ENCODE measurements at regions of chr1 and their contacts with region 1.

Region 1: DNA sequence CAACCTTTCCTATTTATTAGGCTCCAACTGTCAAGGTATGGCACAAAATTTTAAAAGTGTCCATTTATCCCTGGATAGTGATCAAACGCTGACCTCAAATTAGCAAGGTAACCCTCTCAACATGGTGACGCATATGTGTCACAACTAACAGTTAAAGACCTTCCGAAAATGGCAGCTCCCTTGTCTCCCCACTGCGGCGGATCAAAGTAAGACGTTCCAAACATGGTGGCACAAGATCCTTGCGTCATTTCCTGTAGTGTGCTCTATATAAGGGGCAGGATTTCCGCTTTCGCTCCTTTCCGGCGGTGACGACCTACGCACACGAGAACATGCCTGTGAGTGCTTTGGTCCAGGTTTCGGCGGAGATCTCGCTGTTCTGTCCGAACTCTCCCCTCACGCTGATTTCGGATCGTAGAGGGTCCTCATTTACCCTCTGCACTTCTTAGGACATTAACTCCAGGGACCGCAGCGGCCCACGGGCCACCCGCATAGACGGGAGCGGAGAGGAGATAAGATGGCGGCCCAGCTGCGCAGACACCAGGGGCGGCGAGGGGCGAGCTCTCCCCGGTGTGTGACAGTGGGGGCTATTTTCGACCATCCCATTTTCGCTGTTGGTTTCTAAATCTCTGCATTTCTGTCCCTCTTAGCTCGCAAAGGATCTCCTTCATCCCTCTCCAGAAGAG is at the start of gene RPS27:
- DNase-seq: peak; percentile 93
- ATAC-seq: peak; percentile 85
- H3K4me3 Mint-ChIP-seq: peak within 1 kb of the TSS; percentile 95
- H3K27ac Mint-ChIP-seq: peak within 1 kb of the TSS; percentile 98
- H3K4me1 Mint-ChIP-seq: peaks cover 28% of the 10 kb centered on the region
- H3K27me3 Mint-ChIP-seq: no peaks in the 10 kb centered on the region
- CTCF ChIP-seq: no peak
- total RNA-seq, gene RPS27: 1,638 to 1,644 TPM

Region 2: GRCh38 chr1:153727463-153728304 is 262.9 kb before region 1 on chr1 and contains the start of gene INTS3:
- CTCF ChIA-PET with region 1: interaction called, 4 read pairs
- POLR2A ChIA-PET with region 1: interaction called, 12 read pairs
- intact Hi-C with region 1: no loop called
- DNase-seq: peak; percentile 100
- ATAC-seq: peak; percentile 100
- H3K4me3 Mint-ChIP-seq: peak within 1 kb of the TSS; percentile 90
- H3K27ac Mint-ChIP-seq: peak within 1 kb of the TSS; percentile 93
- H3K4me1 Mint-ChIP-seq: peaks cover 39% of the 10 kb centered on the region
- H3K27me3 Mint-ChIP-seq: no peaks in the 10 kb centered on the region
- CTCF ChIP-seq: no peak
- total RNA-seq, gene INTS3: 45.0 to 45.5 TPM

Region 3: DNA sequence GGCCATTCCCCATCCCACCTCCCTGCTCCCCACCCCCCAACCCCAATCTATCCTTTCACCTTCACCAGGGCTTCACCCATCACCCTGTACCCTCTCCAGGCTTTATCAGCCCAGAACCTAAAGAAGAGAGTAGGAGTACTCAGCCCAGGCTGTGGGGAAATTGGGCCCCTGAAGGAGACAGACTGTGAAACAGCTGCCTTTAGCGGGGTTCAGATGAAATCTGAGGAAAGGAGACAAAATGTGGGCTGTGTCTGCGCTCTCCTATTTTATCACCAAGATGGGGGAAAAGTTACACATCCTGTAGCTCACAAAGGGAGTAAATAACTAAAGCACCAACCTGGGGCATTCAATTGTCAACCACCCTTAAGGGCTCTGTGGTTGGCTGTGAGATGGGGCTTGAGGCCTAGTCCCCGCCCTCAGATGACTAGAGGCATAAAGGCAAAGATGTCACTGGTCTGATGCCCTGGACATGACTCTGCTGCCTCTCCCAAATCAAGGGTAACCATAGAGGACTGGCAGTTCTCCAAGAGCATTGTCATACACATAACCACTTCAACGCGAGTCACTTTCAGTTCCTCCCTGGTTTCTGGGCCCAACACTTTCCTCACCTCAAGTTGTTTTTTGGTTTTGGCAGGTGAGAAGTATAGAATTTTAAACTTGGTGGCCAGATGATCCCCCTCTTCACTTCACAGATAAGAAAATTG is 185.4 kb before region 1 on chr1:
- CTCF ChIA-PET with region 1: interaction called, 37 read pairs
- POLR2A ChIA-PET with region 1: interaction called, 35 read pairs
- intact Hi-C with region 1: no loop called
- DNase-seq: peak; percentile 91
- ATAC-seq: peak; percentile 98
- H3K4me3 Mint-ChIP-seq: peak overlapping the region; percentile 41
- H3K27ac Mint-ChIP-seq: peak overlapping the region; percentile 90
- H3K4me1 Mint-ChIP-seq: peaks cover 38% of the 10 kb centered on the region
- H3K27me3 Mint-ChIP-seq: no peaks in the 10 kb centered on the region
- CTCF ChIP-seq: no peak

Region 4: DNA sequence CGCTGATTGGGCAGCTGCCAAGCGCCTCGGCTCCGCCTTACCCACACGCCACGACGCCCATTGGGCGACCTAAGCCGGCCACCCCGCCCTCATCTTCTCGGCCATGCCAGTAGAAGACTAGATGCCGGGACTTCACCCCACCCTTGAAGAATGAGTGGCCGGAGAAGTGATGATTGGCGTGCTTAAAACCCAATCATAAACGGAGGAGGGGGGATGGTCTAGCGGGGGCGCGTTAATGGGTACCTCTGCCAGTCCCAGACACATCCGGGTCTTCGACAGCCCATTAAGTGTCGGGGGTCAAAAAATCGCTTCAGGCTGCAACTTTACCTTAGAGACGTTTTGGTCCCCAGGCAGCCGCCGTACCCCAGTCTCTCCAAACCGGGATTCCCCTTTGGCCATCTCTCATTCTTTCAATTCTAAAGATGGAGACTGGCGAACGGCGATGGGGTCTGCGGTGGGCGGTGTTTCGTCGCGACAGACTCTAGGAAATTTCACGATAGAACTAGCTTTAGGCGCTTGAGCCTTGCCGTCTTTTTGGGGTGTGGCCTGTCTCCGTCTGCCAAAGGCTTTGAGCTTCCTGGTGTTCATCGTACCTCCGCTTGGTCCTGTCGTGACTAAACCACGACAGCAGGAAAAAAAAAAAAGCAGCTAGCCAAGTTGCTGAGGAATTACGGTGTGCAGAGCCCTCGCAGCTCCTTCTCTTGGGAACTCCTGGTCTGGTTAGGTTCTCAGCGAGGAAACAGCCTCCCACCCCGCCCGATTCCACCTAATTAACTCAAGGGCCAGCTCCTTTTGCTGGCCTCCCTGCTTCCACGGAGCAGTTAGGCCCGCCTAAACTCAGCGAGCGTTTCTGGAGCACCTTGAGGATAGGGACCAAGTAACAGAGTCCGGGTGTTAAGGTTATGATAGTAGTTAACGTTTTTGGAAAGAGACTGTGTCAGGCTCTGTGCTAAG is 67.4 kb before region 1 on chr1 and contains the start of gene GATAD2B:
- CTCF ChIA-PET with region 1: interaction called, 7 read pairs
- POLR2A ChIA-PET with region 1: interaction called, 12 read pairs
- intact Hi-C with region 1: no loop called
- DNase-seq: peak; percentile 100
- ATAC-seq: peak; percentile 93
- H3K4me3 Mint-ChIP-seq: peak within 1 kb of the TSS; percentile 95
- H3K27ac Mint-ChIP-seq: peak within 1 kb of the TSS; percentile 97
- H3K4me1 Mint-ChIP-seq: peaks cover 38% of the 10 kb centered on the region
- H3K27me3 Mint-ChIP-seq: no peaks in the 10 kb centered on the region
- CTCF ChIP-seq: no peak
- total RNA-seq, gene GATAD2B: 59.5 to 59.8 TPM

Region 5: GRCh38 chr1:153967082-153968000 is 23.3 kb before region 1 on chr1 and contains the start of gene CREB3L4:
- CTCF ChIA-PET with region 1: interaction called, 73 read pairs
- POLR2A ChIA-PET with region 1: interaction called, 237 read pairs
- intact Hi-C with region 1: no loop called
- DNase-seq: peak; percentile 94
- ATAC-seq: peak; percentile 88
- H3K4me3 Mint-ChIP-seq: peak within 1 kb of the TSS; percentile 99
- H3K27ac Mint-ChIP-seq: peak within 1 kb of the TSS; percentile 94
- H3K4me1 Mint-ChIP-seq: peaks cover 32% of the 10 kb centered on the region
- H3K27me3 Mint-ChIP-seq: no peaks in the 10 kb centered on the region
- CTCF ChIP-seq: peak; percentile 18
- total RNA-seq, gene CREB3L4: 8.3 to 8.8 TPM

Region 6: GRCh38 chr1:154183045-154183915 is 192.7 kb after region 1 on chr1:
- CTCF ChIA-PET with region 1: interaction called, 4 read pairs
- POLR2A ChIA-PET with region 1: interaction called, 25 read pairs
- intact Hi-C with region 1: no loop called
- DNase-seq: peak; percentile 97
- ATAC-seq: peak; percentile 74
- H3K4me3 Mint-ChIP-seq: peak overlapping the region; percentile 97
- H3K27ac Mint-ChIP-seq: peak overlapping the region; percentile 99
- H3K4me1 Mint-ChIP-seq: peaks cover 41% of the 10 kb centered on the region
- H3K27me3 Mint-ChIP-seq: no peaks in the 10 kb centered on the region
- CTCF ChIP-seq: no peak

Measured in activated CD8-positive, alpha-beta T cell treated with anti-CD3 and anti-CD28 coated beads for 36 hours (primary cell).